A673 (cell line): ENCODE measurements at regions of chrX and their contacts with region 1.

Region 1: DNA sequence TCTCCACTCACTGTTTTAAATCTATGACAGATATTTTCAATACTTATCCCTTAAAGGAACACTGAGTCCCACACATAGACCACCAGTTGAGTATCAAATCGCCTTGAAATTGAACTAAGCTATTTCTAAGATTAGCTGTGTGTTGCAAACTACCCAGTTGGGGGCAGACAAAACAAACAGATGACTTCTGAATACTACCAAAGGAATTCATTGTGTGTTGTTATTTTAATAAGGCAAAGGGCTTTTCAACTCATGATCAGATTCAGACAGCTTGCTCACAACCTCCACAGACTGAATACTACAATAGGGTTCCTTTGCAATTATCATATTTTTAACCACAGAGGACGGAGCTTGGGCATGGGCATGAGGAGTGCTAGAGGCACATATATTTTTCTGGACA is 283.0 kb upstream of the GPC4 start:
- DNase-seq: peak; percentile 39
- H3K4me3 ChIP-seq: no peak overlapping the region
- H3K27ac ChIP-seq: no peak overlapping the region
- H3K4me1 ChIP-seq: no peaks in the 10 kb centered on the region
- H3K27me3 ChIP-seq: peaks cover 8% of the 10 kb centered on the region
- CTCF ChIP-seq: peak; percentile 42; the same call in 1 of the 2 replicates

Region 2: DNA sequence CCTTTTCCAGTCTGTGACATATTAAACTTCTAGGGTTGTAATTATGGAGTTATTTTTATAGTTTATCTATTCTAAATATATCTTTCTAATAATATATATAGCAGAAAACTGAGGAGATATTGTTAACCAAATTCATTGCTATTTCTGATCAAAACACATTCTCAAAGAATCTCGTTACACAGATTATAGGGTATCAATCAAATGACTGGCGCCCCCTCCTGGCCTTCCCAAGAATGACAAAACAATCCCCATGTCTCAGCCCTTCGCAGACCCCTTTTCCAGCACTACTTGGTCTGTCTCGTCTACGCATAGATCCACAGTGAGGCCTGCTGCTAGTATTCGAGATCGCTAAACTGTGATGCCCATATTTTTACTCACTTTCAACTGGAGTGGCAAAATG is 77.8 kb after region 1 on chrX:
- CTCF ChIA-PET with region 1: no interaction called
- POLR2A ChIA-PET with region 1: no interaction called
- intact Hi-C with region 1: loop called (anchors 1 kb)
- DNase-seq: peak; percentile 44
- H3K4me3 ChIP-seq: no peak overlapping the region
- H3K27ac ChIP-seq: no peak overlapping the region
- H3K4me1 ChIP-seq: no peaks in the 10 kb centered on the region
- H3K27me3 ChIP-seq: peaks cover 2% of the 10 kb centered on the region
- CTCF ChIP-seq: peak; percentile 69